Heart left ventricle (tissue), 16 donors: ENCODE measurements at regions of chr14 and their contacts with region 1.

Region 1: DNA sequence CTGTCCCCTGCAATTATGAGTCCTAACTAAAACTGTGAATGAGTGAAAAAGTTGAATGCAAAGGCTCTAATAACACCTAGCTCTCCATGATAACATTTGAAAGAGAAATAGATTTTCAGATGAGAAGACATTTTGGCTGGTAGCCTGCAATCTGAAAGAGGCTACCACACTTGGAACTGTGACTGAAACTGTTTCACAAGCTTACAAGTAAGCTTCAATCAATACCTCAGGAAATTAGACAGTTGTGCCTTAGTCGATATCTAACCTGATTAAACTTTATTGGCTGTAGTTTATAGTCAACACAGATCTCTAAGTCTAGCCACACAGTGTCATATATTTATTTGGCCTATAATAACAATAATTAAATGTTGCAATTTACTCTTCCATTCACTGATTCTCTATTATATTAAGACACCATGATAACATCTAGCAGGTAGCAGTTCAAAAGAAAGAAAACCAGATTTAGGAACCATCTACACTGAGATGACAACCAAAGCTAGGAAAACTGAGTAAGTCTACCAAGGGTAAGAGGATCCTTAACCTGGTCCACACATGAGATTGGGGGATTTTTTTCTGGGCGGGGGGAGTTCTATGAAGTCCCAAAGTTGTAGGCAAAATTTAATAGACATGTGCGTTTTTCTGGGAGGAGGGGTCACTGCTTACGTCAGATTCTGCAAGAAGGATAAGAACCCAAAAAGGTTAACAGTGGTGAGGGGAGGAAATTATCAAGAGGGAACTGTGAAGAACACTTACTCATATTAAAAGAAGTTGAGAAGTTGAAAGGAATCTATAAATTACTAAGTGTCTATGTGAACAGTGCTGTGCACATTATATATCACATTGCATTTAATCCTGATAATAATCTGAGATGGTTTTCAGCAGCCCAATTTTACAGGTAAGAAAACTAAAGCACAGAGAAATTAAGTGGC is 65.8 kb downstream of the NUMB start:
- DNase-seq: no peak
- ATAC-seq: no peak
- H3K4me3 ChIP-seq: no peak overlapping the region
- H3K27ac ChIP-seq: no peak overlapping the region
- H3K4me1 ChIP-seq: no peaks in the 10 kb centered on the region
- H3K27me3 ChIP-seq: no peaks in the 10 kb centered on the region
- CTCF ChIP-seq: no peak
- POLR2A ChIP-seq: no peak

Region 2: GRCh38 chr14:73381380-73382013 is 11.1 kb before region 1 on chr14:
- intact Hi-C with region 1: loop called in 1 of 10 experiments (anchors 1 kb)
- DNase-seq: no peak
- ATAC-seq: no peak
- H3K4me3 ChIP-seq: no peak overlapping the region
- H3K27ac ChIP-seq: no peak overlapping the region
- H3K4me1 ChIP-seq: peaks cover 0 to 4% (median 0%) of the 10 kb centered on the region in 12 donors
- H3K27me3 ChIP-seq: no peaks in the 10 kb centered on the region
- CTCF ChIP-seq: no peak
- POLR2A ChIP-seq: no peak